ENCODE measurements at regions of chrX and their contacts with region 1.

Region 1: DNA sequence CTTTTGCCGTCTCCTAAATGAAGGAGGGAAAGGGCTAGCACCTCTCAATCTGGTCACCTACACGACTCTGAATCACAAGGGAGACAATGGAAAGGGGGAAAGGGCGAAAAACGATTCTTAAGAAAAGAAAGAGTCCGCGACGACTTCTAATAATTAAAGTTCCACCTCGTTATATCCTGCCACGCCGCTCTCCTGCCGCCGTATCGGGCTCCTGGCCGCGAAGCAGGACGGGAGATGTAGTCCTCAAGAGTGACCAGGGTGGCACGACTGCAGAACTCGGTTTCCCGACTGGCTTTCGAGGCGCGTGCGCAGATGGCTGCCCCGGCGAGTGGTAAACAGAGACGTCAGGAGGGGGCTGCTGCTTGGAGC is at the start of gene FOXO4:
- DNase-seq: peak; percentile 91
- H3K4me3 Mint-ChIP-seq: peak within 1 kb of the TSS; percentile 82
- H3K27ac Mint-ChIP-seq: peak within 1 kb of the TSS; percentile 72
- H3K4me1 Mint-ChIP-seq: peaks cover 30% of the 10 kb centered on the region
- H3K27me3 Mint-ChIP-seq: no peaks in the 10 kb centered on the region
- total RNA-seq, gene FOXO4: 7.9 to 8.9 TPM

Region 2: GRCh38 chrX:71111141-71111843 is 15.8 kb after region 1 on chrX and contains the start of gene IL2RG:
- CTCF ChIA-PET with region 1: interaction called, 20 read pairs
- intact Hi-C with region 1: loop called (anchors 1 kb)
- DNase-seq: peak; percentile 87
- H3K4me3 Mint-ChIP-seq: peak within 1 kb of the TSS; percentile 93
- H3K27ac Mint-ChIP-seq: peak within 1 kb of the TSS; percentile 95
- H3K4me1 Mint-ChIP-seq: peaks cover 37% of the 10 kb centered on the region
- H3K27me3 Mint-ChIP-seq: no peaks in the 10 kb centered on the region
- total RNA-seq, gene IL2RG: 144 to 148 TPM

Region 3: GRCh38 chrX:71118032-71118984 is 22.8 kb after region 1 on chrX and contains the start of gene MED12:
- CTCF ChIA-PET with region 1: interaction called, 20 read pairs
- intact Hi-C with region 1: loop called (anchors 1 kb)
- DNase-seq: peak; percentile 90
- H3K4me3 Mint-ChIP-seq: peak within 1 kb of the TSS; percentile 78
- H3K27ac Mint-ChIP-seq: peak within 1 kb of the TSS; percentile 90
- H3K4me1 Mint-ChIP-seq: peaks cover 21% of the 10 kb centered on the region
- H3K27me3 Mint-ChIP-seq: no peaks in the 10 kb centered on the region
- total RNA-seq, gene MED12: 43.5 to 43.6 TPM